ENCODE measurements at regions of chr3 and their contacts with region 1.

Region 1: DNA sequence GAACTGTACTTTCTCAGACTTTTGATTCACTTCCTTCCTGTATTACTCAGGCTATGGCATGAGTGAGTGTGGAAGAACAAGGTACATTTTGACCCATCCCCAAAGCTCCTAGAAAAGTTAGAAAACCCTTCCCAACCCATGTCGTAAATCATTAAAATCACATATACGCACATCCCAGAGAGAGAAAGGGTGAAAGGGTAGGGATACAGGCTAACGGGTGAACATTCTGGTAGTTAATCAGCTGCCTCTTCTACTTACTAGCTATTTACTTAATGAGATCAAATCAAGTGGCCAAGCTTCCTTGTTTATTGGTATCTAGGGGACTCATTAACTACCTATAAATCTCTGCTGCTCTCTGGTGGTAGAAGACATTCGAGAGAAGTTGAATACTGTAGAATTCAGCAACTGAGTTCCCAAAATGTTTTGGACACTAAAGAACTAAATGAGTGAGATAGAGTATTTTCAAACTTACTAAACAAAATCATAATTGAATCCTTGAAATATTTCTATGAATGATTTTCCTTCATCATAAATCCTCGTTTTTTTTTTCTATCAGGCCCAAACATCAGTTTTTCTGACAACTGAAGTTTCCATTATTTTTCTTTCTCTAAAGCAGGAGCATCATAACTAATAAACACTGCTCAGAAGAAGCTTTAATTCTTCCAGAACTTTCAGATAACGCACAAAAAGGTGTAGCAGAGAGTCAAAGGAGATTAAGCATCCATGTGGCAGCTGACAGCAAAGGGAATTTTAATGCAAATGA is 124.2 kb downstream of the IMPG2 start:
- DNase-seq: peak; percentile 89
- H3K4me3 ChIP-seq: no peak overlapping the region
- H3K27ac ChIP-seq: peak overlapping the region; percentile 81
- H3K4me1 ChIP-seq: peaks cover 23% of the 10 kb centered on the region
- H3K27me3 ChIP-seq: no peaks in the 10 kb centered on the region
- CTCF ChIP-seq: peak; percentile 30 to 42
- POLR2A ChIP-seq: no peak

Region 2: DNA sequence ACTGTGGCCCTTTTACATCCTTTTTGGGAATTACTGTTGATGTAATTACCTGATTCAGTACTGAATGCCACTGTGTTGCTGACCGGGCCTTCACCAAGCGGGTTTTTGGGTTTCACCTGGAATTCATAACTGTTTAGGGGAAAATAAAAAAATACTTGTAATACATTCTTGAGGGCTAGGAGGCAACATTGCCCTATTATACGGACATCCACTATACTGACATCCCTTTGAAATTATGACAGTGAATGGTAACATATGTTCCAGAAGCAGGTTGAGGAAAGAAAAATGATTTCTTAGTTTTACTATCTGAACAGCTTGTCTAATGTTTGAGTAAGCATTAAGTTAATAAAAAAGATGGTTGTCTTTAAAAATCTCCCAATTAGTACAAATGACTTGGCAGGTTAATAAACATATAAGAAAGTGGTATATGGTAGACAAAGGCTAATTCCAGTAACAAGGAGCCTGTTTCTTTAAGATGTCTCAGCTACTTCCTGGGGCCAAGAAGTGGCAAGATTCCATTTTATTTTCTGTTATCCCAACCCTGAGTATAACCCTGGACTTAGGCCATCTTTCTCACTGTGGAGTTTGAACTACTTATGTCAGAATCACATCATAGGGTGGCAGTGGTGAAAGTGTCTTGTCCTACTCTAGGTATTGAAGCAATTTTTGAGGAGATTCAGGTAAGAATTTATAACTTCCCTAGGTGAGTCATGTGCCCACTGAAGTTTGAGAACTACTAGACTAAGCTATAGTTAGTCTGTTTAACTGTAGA is 441.4 kb before region 1 on chr3:
- CTCF ChIA-PET with region 1: interaction called, 17 read pairs
- POLR2A ChIA-PET with region 1: no interaction called
- dilution Hi-C with region 1: no loop called
- intact Hi-C with region 1: loop called (anchors 5 kb)
- DNase-seq: peak; percentile 7
- H3K4me3 ChIP-seq: no peak overlapping the region
- H3K27ac ChIP-seq: no peak overlapping the region
- H3K4me1 ChIP-seq: no peaks in the 10 kb centered on the region
- H3K27me3 ChIP-seq: no peaks in the 10 kb centered on the region
- CTCF ChIP-seq: no peak
- POLR2A ChIP-seq: no peak

Region 3: GRCh38 chr3:100875239-100875638 is 320.9 kb before region 1 on chr3:
- CTCF ChIA-PET with region 1: interaction called, 28 read pairs
- POLR2A ChIA-PET with region 1: no interaction called
- dilution Hi-C with region 1: no loop called
- intact Hi-C with region 1: no loop called
- DNase-seq: peak; percentile 94
- H3K4me3 ChIP-seq: no peak overlapping the region
- H3K27ac ChIP-seq: peak overlapping the region; percentile 2
- H3K4me1 ChIP-seq: peaks cover 13% of the 10 kb centered on the region
- H3K27me3 ChIP-seq: no peaks in the 10 kb centered on the region
- CTCF ChIP-seq: no peak
- POLR2A ChIP-seq: no peak

Region 4: DNA sequence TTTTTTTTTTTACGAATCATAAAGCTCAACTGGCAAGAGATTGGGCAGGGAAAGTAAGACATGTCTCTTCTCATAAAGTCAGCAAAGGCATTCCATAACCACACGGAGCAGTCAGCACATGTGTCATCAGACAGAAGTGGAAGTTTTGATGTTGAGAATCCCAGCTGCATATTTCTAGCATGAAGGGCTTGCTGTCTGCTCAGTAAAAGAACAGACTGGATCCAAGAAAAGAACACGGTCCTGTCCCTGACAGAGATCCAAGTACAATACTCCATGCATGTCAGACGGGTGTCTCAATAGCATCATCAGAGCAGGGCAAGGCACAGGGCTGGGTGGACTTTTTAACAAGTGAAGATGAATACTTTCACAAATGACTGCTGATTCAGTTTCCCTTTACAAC is 241.1 kb before region 1 on chr3:
- CTCF ChIA-PET with region 1: interaction called, 16 read pairs
- POLR2A ChIA-PET with region 1: no interaction called
- dilution Hi-C with region 1: no loop called
- intact Hi-C with region 1: no loop called
- DNase-seq: peak; percentile 68
- H3K4me3 ChIP-seq: no peak overlapping the region
- H3K27ac ChIP-seq: no peak overlapping the region
- H3K4me1 ChIP-seq: peaks cover 4% of the 10 kb centered on the region
- H3K27me3 ChIP-seq: no peaks in the 10 kb centered on the region
- CTCF ChIP-seq: no peak
- POLR2A ChIP-seq: no peak

Region 5: DNA sequence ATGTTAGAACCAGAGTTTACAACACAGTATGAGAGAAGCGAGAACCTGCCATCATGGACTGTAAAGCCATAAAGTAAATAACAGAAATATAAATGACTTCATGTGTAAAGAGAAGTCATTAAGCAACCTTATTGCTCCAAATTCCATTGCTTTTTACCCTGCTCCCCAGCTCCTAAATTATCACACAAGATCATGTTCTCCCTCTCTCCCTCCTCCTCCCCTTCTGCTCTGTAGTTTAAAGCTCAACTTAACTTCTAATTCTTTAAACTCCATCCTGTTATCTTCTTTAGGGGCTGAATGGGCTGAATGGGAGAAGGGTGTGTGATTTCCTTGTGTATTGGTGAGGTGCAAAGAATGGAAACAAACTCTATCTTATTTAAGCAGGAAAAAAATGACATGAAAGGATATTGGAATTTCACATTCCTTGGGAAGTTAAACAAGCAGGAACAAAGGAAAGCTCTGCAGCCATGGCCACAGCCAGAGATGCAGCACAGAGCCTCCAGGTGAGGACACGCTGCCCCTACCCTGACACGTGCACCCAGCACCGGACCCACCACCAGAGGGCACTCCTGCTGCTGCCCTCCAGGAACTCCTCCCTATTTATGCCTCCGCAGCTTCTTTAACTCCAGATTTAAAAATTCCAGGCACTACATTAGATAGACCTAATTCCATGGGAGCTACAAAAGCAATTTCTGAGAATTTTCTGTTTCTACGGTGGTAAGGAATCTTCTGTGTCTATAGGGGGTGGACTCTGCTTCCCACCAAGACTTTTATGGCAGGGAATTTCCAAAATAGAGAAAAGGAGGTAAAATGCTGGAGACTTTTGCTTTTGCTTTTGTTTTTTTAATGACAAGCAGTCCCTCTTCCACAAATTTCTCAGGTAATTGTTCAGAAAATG is 126.0 kb before region 1 on chr3:
- CTCF ChIA-PET with region 1: interaction called, 55 read pairs
- POLR2A ChIA-PET with region 1: no interaction called
- dilution Hi-C with region 1: no loop called
- intact Hi-C with region 1: loop called (anchors 1 kb)
- DNase-seq: peak; percentile 46
- H3K4me3 ChIP-seq: no peak overlapping the region
- H3K27ac ChIP-seq: peak overlapping the region; percentile 88
- H3K4me1 ChIP-seq: peaks cover 67% of the 10 kb centered on the region
- H3K27me3 ChIP-seq: no peaks in the 10 kb centered on the region
- CTCF ChIP-seq: peak; percentile 55 to 72
- POLR2A ChIP-seq: no peak

Region 6: GRCh38 chr3:101635954-101636798 is 440.0 kb after region 1 on chr3:
- CTCF ChIA-PET with region 1: interaction called, 7 read pairs
- POLR2A ChIA-PET with region 1: no interaction called
- dilution Hi-C with region 1: no loop called
- intact Hi-C with region 1: loop called (anchors 2 kb)
- DNase-seq: peak; percentile 60
- H3K4me3 ChIP-seq: no peak overlapping the region
- H3K27ac ChIP-seq: no peak overlapping the region
- H3K4me1 ChIP-seq: no peaks in the 10 kb centered on the region
- H3K27me3 ChIP-seq: no peaks in the 10 kb centered on the region
- CTCF ChIP-seq: peak; percentile 69 to 71
- POLR2A ChIP-seq: no peak

Measured in endothelial cell of umbilical vein (primary cell).